ENCODE measurements at regions of chr11 and their contacts with region 1.

Region 1: DNA sequence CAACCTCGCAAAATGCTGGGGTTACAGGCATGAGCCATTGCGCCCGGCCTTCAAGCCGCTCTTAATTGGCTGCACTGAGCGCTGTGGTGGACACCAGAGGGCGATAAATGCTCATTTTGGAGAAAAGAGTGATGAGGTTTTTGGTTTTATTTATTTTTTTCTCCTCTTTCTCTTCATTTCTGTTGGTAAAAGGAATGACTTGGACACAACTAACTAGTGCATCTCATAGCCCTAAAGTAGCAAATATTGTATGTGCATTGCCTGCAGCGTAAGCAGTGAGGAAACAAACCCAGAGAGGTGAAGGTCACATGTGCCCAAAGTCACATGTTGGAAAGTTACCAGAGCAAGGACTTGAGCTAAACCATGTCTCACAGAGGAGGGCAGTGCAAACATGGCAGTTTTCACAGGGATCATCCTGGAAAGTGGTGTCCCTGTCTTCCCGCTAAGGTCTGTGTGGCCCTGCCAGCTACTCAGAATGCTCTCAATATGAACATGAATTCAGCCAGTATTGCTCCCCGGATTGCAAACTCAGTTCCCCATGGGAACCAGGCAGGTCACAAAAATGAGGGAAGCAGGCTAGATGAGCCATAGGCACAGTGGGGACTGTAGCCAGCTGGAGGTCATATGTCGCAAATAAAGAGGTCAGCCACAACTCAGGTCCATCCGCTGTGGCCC is 8.6 kb upstream of the CD82 start:
- DNase-seq: peak; percentile 81
- ATAC-seq: peak; percentile 57
- H3K4me3 ChIP-seq: no peak overlapping the region
- H3K4me3 Mint-ChIP-seq: peak overlapping the region; percentile 48
- H3K27ac ChIP-seq: peak overlapping the region; percentile 61 to 82
- H3K27ac Mint-ChIP-seq: peak overlapping the region; percentile 86
- H3K4me1 ChIP-seq: peaks cover 52 to 67% of the 10 kb centered on the region in 2 donors
- H3K4me1 Mint-ChIP-seq: peaks cover 60% of the 10 kb centered on the region
- H3K27me3 ChIP-seq: no peaks in the 10 kb centered on the region
- H3K27me3 Mint-ChIP-seq: no peaks in the 10 kb centered on the region
- CTCF ChIP-seq: peak; percentile 78

Region 2: DNA sequence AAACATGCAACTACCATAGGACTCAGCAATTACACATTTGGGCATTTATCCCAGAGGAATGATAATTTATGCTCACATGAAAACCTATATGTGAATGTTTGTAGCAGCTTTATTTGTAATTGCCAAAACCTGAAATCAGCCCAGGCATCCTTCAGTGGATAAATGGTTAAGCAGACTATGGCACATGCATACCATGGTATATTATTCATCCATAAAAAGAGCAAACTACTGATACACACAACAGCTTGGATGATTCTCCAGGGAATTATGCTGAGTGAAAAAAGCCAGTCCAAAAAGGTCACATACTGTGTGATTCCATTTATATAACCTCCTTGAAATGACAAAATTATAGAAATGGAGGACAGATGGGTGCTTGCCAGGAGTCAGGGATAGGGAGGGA is 333.6 kb before region 1 on chr11:
- CTCF ChIA-PET with region 1: no interaction called
- POLR2A ChIA-PET with region 1: no interaction called
- intact Hi-C with region 1: no loop called
- DNase-seq: no peak
- ATAC-seq: no peak
- H3K4me3 ChIP-seq: no peak overlapping the region
- H3K4me3 Mint-ChIP-seq: no peak overlapping the region
- H3K27ac ChIP-seq: no peak overlapping the region
- H3K27ac Mint-ChIP-seq: no peak overlapping the region
- H3K4me1 ChIP-seq: no peaks in the 10 kb centered on the region
- H3K4me1 Mint-ChIP-seq: peaks cover 4% of the 10 kb centered on the region
- H3K27me3 ChIP-seq: no peaks in the 10 kb centered on the region
- H3K27me3 Mint-ChIP-seq: no peaks in the 10 kb centered on the region
- CTCF ChIP-seq: no peak

Region 3: GRCh38 chr11:44286268-44286880 is 270.5 kb before region 1 on chr11:
- CTCF ChIA-PET with region 1: interaction called, 11 read pairs
- POLR2A ChIA-PET with region 1: no interaction called
- intact Hi-C with region 1: no loop called
- DNase-seq: peak; percentile 77
- ATAC-seq: peak; percentile 74
- H3K4me3 ChIP-seq: no peak overlapping the region
- H3K4me3 Mint-ChIP-seq: no peak overlapping the region
- H3K27ac ChIP-seq: no peak overlapping the region
- H3K27ac Mint-ChIP-seq: no peak overlapping the region
- H3K4me1 ChIP-seq: no peaks in the 10 kb centered on the region
- H3K4me1 Mint-ChIP-seq: no peaks in the 10 kb centered on the region
- H3K27me3 ChIP-seq: no peaks in the 10 kb centered on the region
- H3K27me3 Mint-ChIP-seq: peaks cover 27% of the 10 kb centered on the region
- CTCF ChIP-seq: peak; percentile 96

Region 4: GRCh38 chr11:44596525-44597276 is 39.8 kb after region 1 on chr11:
- CTCF ChIA-PET with region 1: interaction called, 130 read pairs
- POLR2A ChIA-PET with region 1: interaction called, 9 read pairs
- intact Hi-C with region 1: no loop called
- DNase-seq: peak; percentile 90
- ATAC-seq: peak; percentile 25
- H3K4me3 ChIP-seq: peak overlapping the region in 2 of 5 experiments; percentile 9 to 28
- H3K4me3 Mint-ChIP-seq: peak overlapping the region; percentile 77
- H3K27ac ChIP-seq: peak overlapping the region; percentile 78 to 85
- H3K27ac Mint-ChIP-seq: peak overlapping the region; percentile 92
- H3K4me1 ChIP-seq: peaks cover 69 to 92% of the 10 kb centered on the region in 2 donors
- H3K4me1 Mint-ChIP-seq: peaks cover 94% of the 10 kb centered on the region
- H3K27me3 ChIP-seq: no peaks in the 10 kb centered on the region
- H3K27me3 Mint-ChIP-seq: no peaks in the 10 kb centered on the region
- CTCF ChIP-seq: no peak

Region 5: GRCh38 chr11:44621140-44621681 is 64.3 kb after region 1 on chr11:
- CTCF ChIA-PET with region 1: interaction called, 816 read pairs
- POLR2A ChIA-PET with region 1: interaction called, 16 read pairs
- intact Hi-C with region 1: loop called (anchors 1 kb)
- DNase-seq: peak; percentile 70
- ATAC-seq: peak; percentile 53
- H3K4me3 ChIP-seq: no peak overlapping the region
- H3K4me3 Mint-ChIP-seq: no peak overlapping the region
- H3K27ac ChIP-seq: no peak overlapping the region
- H3K27ac Mint-ChIP-seq: peak overlapping the region; percentile 50
- H3K4me1 ChIP-seq: peaks cover 20 to 30% of the 10 kb centered on the region in 2 donors
- H3K4me1 Mint-ChIP-seq: peaks cover 73% of the 10 kb centered on the region
- H3K27me3 ChIP-seq: no peaks in the 10 kb centered on the region
- H3K27me3 Mint-ChIP-seq: no peaks in the 10 kb centered on the region
- CTCF ChIP-seq: peak; percentile 81

Region 6: DNA sequence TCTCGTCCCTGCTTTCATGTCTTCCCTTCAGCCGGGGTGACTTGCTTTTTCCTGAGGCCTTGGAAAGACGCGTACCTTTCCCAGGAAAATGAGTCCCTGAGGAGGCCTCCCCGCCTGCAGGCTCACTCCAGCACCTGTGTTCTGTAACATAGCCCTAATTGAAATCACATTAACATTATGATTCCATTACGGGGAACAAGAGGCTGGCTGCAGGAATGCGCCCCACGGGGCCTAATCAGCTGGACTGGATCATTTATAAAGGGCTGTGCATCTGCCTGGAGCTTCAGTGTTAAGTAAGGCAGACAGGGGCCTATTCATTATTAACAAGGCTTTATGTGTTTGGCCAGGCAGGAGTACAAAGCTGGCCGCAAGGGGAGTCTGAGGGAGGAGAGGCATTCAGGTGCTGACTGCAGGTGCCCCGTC is 128.0 kb after region 1 on chr11:
- CTCF ChIA-PET with region 1: no interaction called
- POLR2A ChIA-PET with region 1: no interaction called
- intact Hi-C with region 1: no loop called
- DNase-seq: no peak
- ATAC-seq: no peak
- H3K4me3 ChIP-seq: no peak overlapping the region
- H3K4me3 Mint-ChIP-seq: no peak overlapping the region
- H3K27ac ChIP-seq: no peak overlapping the region
- H3K27ac Mint-ChIP-seq: no peak overlapping the region
- H3K4me1 ChIP-seq: peaks cover 5 to 10% of the 10 kb centered on the region in 2 donors
- H3K4me1 Mint-ChIP-seq: peaks cover 13% of the 10 kb centered on the region
- H3K27me3 ChIP-seq: peaks cover 0 to 5% (median 3%) of the 10 kb centered on the region in 4 experiments
- H3K27me3 Mint-ChIP-seq: peaks cover 22% of the 10 kb centered on the region
- CTCF ChIP-seq: no peak

Region 7: DNA sequence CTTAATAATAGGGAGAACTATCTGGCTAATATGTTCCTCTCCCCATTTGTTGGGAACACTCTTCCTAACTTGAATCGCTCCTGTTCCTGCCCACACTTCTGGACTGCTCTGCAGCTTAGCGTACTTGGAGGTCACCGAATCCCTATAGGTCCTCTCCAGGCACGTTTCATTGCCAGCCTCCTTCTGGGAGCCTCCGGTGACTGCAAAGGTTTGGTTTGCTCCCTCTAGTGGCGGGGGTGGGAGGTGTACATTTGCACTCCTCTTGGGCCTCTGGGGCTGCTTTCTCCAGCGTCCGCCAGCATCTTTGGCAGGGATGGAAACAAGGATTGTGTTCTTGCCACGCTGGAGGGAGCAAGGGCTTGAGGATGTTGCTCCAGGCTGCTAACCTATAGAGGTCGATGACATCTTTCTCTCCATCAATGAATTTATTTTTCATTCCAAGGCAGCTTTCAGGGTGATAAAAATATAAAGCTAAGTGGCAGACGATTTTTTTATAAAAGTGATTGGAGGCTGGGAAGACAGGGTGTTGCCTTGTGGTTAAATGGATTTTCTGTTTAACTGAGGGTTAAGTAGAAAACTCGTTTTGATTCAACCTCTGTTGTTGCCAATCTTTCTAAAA is 218.6 kb after region 1 on chr11:
- CTCF ChIA-PET with region 1: interaction called, 54 read pairs
- POLR2A ChIA-PET with region 1: no interaction called
- intact Hi-C with region 1: no loop called
- DNase-seq: peak; percentile 65
- ATAC-seq: peak; percentile 47
- H3K4me3 ChIP-seq: no peak overlapping the region
- H3K4me3 Mint-ChIP-seq: no peak overlapping the region
- H3K27ac ChIP-seq: no peak overlapping the region
- H3K27ac Mint-ChIP-seq: no peak overlapping the region
- H3K4me1 ChIP-seq: no peaks in the 10 kb centered on the region
- H3K4me1 Mint-ChIP-seq: peaks cover 2% of the 10 kb centered on the region
- H3K27me3 ChIP-seq: peaks cover 0 to 10% (median 0%) of the 10 kb centered on the region in 4 experiments
- H3K27me3 Mint-ChIP-seq: no peaks in the 10 kb centered on the region
- CTCF ChIP-seq: peak; percentile 80

Region 8: DNA sequence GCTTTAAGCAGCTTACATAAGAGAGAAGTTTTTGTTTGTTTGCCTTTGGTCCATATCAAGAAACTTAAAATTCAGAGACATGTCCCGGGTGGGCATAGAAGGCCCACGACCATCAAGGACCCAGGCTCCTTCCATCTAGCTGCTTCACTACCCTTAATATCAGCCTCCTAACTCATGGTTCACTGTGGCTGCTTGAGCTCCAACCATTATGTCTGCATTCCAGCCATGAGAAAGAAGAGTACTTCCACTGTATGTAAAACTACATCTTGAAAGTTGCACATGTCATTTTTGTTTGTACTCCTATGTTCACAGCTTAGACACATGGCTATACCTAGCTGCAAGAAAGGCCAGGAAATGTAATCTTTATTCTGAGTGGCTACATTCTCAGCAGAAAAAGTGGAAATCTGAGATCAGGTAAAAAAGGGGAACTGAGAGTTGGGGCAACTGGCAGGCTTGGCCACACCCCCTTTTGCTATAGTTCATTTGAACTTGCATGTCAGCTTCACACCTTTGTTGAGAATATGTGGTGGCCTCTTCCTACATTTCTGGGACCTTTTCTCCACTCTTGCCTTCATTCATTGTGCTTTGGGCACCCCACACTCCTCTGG is 475.1 kb after region 1 on chr11:
- CTCF ChIA-PET with region 1: interaction called, 3 read pairs
- POLR2A ChIA-PET with region 1: no interaction called
- intact Hi-C with region 1: loop called (anchors 5 kb)
- DNase-seq: peak; percentile 89
- ATAC-seq: peak; percentile 46
- H3K4me3 ChIP-seq: no peak overlapping the region
- H3K4me3 Mint-ChIP-seq: peak overlapping the region; percentile 59
- H3K27ac ChIP-seq: peak overlapping the region; percentile 54 to 61
- H3K27ac Mint-ChIP-seq: peak overlapping the region; percentile 80
- H3K4me1 ChIP-seq: peaks cover 35 to 50% of the 10 kb centered on the region in 2 donors
- H3K4me1 Mint-ChIP-seq: peaks cover 61% of the 10 kb centered on the region
- H3K27me3 ChIP-seq: no peaks in the 10 kb centered on the region
- H3K27me3 Mint-ChIP-seq: no peaks in the 10 kb centered on the region
- CTCF ChIP-seq: no peak

Region 9: DNA sequence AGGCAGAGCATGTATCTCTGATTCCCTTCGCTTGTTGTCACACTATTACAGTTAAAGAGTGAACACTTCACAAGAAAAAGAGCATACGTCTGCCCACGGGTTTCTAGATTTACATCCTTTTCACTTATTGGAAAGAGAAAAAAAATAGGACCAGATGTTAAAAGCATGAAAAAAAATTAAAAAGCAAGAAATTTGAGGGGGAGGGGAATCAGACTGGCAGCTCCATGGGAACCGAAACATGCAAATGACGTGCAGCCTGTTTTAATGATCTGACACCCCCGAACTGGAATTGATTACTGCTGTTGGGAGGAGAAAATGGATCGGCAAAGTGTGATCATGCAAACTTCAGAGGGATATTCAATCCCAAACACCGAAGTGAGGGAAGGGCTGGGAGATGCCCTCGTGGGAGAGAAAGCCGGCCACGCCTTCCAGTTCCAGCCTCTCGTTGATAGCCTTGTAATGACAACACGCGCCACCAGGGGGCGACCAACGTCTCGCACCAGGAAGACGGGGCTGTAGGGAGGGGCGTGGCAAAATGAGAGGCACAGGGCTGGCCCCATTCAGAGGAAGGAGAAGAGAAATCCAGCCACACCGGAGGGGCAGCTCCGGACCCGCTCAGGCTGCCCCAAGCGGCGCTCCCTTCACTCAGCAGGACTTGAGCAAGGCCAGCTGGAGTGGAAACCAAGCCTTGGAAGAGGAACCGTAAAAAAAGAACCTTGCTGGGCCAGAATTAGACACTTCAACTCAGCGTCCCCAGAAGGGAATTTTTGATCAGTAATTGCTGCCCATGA is 783.1 kb after region 1 on chr11:
- CTCF ChIA-PET with region 1: no interaction called
- POLR2A ChIA-PET with region 1: no interaction called
- intact Hi-C with region 1: no loop called
- DNase-seq: peak; percentile 93
- ATAC-seq: peak; percentile 100
- H3K4me3 ChIP-seq: peak overlapping the region; percentile 23 to 65 (median 50)
- H3K4me3 Mint-ChIP-seq: peak overlapping the region; percentile 92
- H3K27ac ChIP-seq: no peak overlapping the region
- H3K27ac Mint-ChIP-seq: peak overlapping the region; percentile 76
- H3K4me1 ChIP-seq: peaks cover 8 to 13% of the 10 kb centered on the region in 2 donors
- H3K4me1 Mint-ChIP-seq: peaks cover 18% of the 10 kb centered on the region
- H3K27me3 ChIP-seq: peaks cover 0 to 4% (median 2%) of the 10 kb centered on the region in 4 experiments
- H3K27me3 Mint-ChIP-seq: peaks cover 26% of the 10 kb centered on the region
- CTCF ChIP-seq: peak; percentile 90